ENCODE measurements at regions of chrX and their contacts with region 1.

Region 1: GRCh38 chrX:46408553-46409407 is 136.4 kb downstream of the ZNF674 start:
- DNase-seq: no peak
- H3K4me3 ChIP-seq: no peak overlapping the region
- CTCF ChIP-seq: peak; percentile 55

Region 2: GRCh38 chrX:45824471-45824870 is 584.3 kb before region 1 on chrX:
- CTCF ChIA-PET with region 1: interaction called, 20 read pairs
- POLR2A ChIA-PET with region 1: interaction called, 3 read pairs
- DNase-seq: peak; percentile 70
- H3K4me3 ChIP-seq: no peak overlapping the region
- CTCF ChIP-seq: peak; percentile 80

Region 3: GRCh38 chrX:46236411-46236810 is 172.4 kb before region 1 on chrX:
- CTCF ChIA-PET with region 1: no interaction called
- POLR2A ChIA-PET with region 1: no interaction called
- DNase-seq: no peak
- H3K4me3 ChIP-seq: no peak overlapping the region
- CTCF ChIP-seq: no peak

Measured in AG04449 (cell line).